HCT116 (cell line): ENCODE measurements at regions of chr12 and their contacts with region 1.

Region 1: GRCh38 chr12:8078398-8078797 is 3.7 kb upstream of the NECAP1 start:
- DNase-seq: peak; percentile 50
- ATAC-seq: peak; percentile 34; the same call in 1 of the 2 replicates
- H3K4me3 ChIP-seq: no peak overlapping the region
- H3K27ac ChIP-seq: no peak overlapping the region
- H3K4me1 ChIP-seq: peaks cover 7 to 22% of the 10 kb centered on the region in 2 experiments
- H3K27me3 ChIP-seq: no peaks in the 10 kb centered on the region
- CTCF ChIP-seq: peak; percentile 47 to 71 (median 48); a peak in 5 of 6 replicates
- POLR2A ChIP-seq: no peak
- RAD21 ChIP-seq: peak; percentile 75

Region 2: DNA sequence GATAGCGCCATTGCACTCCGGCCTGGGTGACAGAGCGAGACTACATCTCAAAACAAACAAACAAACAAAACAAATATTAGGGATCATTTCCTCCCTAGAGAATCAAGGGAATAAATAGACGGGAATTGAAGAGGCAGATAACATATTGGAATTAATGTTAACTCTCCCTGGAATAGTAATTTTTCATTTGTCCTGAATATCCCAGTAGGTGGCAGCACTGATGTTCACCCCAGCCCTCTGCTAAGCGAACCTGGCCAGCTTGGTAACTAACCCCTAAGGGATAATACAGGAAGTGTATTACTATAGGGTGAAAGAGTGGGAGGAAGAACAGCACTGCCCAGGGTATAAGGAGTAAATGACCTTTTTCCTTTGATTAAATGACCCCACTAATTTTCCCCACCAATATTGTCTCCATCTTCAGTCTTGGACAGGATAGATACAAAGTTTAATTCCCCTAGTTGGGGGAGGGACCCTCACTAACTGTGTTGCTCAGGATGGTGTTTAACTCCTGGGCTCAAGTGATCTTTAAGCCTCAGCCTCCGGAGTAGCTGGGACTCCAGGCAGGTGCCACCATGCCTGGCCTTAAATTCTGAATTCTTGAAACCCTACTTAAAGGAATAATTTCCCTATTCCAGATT is 246.2 kb before region 1 on chr12:
- CTCF ChIA-PET with region 1: interaction called, 8 read pairs
- POLR2A ChIA-PET with region 1: no interaction called
- RAD21 ChIA-PET with region 1: no interaction called
- intact Hi-C with region 1: loop called (anchors 2 kb)
- DNase-seq: peak; percentile 32
- ATAC-seq: peak; percentile 99
- H3K4me3 ChIP-seq: no peak overlapping the region
- H3K27ac ChIP-seq: no peak overlapping the region
- H3K4me1 ChIP-seq: no peaks in the 10 kb centered on the region
- H3K27me3 ChIP-seq: no peaks in the 10 kb centered on the region
- CTCF ChIP-seq: peak; percentile 59 to 73 (median 60); a peak in 5 of 6 replicates
- POLR2A ChIP-seq: no peak
- RAD21 ChIP-seq: peak; percentile 57

Region 3: GRCh38 chr12:7859552-7859951 is 218.8 kb before region 1 on chr12:
- CTCF ChIA-PET with region 1: interaction called, 10 read pairs
- POLR2A ChIA-PET with region 1: no interaction called
- RAD21 ChIA-PET with region 1: no interaction called
- intact Hi-C with region 1: loop called (anchors 10 kb)
- DNase-seq: no peak
- ATAC-seq: no peak
- H3K4me3 ChIP-seq: no peak overlapping the region
- H3K27ac ChIP-seq: no peak overlapping the region
- H3K4me1 ChIP-seq: peaks cover 0 to 16% of the 10 kb centered on the region in 2 experiments; a peak in 2 of 4 replicates
- H3K27me3 ChIP-seq: no peaks in the 10 kb centered on the region
- CTCF ChIP-seq: no peak
- POLR2A ChIP-seq: no peak
- RAD21 ChIP-seq: no peak

Region 4: GRCh38 chr12:7869127-7869526 is 209.3 kb before region 1 on chr12:
- CTCF ChIA-PET with region 1: no interaction called
- POLR2A ChIA-PET with region 1: no interaction called
- RAD21 ChIA-PET with region 1: no interaction called
- intact Hi-C with region 1: loop called (anchors 10 kb)
- DNase-seq: no peak
- ATAC-seq: no peak
- H3K4me3 ChIP-seq: no peak overlapping the region
- H3K27ac ChIP-seq: no peak overlapping the region
- H3K4me1 ChIP-seq: no peaks in the 10 kb centered on the region
- H3K27me3 ChIP-seq: no peaks in the 10 kb centered on the region
- CTCF ChIP-seq: no peak
- POLR2A ChIP-seq: no peak
- RAD21 ChIP-seq: no peak

Region 5: GRCh38 chr12:7981446-7981845 is 97.0 kb before region 1 on chr12:
- CTCF ChIA-PET with region 1: no interaction called
- POLR2A ChIA-PET with region 1: no interaction called
- RAD21 ChIA-PET with region 1: no interaction called
- intact Hi-C with region 1: no loop called
- DNase-seq: no peak
- ATAC-seq: no peak
- H3K4me3 ChIP-seq: no peak overlapping the region
- H3K27ac ChIP-seq: no peak overlapping the region
- H3K4me1 ChIP-seq: peaks cover 10 to 42% of the 10 kb centered on the region in 2 experiments
- H3K27me3 ChIP-seq: no peaks in the 10 kb centered on the region
- CTCF ChIP-seq: no peak
- POLR2A ChIP-seq: no peak
- RAD21 ChIP-seq: no peak

Region 6: GRCh38 chr12:8026291-8026900 is 52.0 kb before region 1 on chr12:
- CTCF ChIA-PET with region 1: interaction called, 5 read pairs
- POLR2A ChIA-PET with region 1: no interaction called
- RAD21 ChIA-PET with region 1: no interaction called
- intact Hi-C with region 1: loop called (anchors 5 kb)
- DNase-seq: peak; percentile 97
- ATAC-seq: peak; percentile 93
- H3K4me3 ChIP-seq: peak overlapping the region; percentile 61 to 62
- H3K27ac ChIP-seq: peak overlapping the region; percentile 97
- H3K4me1 ChIP-seq: peaks cover 5 to 23% of the 10 kb centered on the region in 2 experiments; a peak in 3 of 4 replicates
- H3K27me3 ChIP-seq: no peaks in the 10 kb centered on the region
- CTCF ChIP-seq: no peak
- POLR2A ChIP-seq: no peak
- RAD21 ChIP-seq: no peak

Region 7: GRCh38 chr12:8045952-8046944 is 32.1 kb before region 1 on chr12:
- CTCF ChIA-PET with region 1: interaction called, 35 read pairs
- POLR2A ChIA-PET with region 1: no interaction called
- RAD21 ChIA-PET with region 1: no interaction called
- intact Hi-C with region 1: loop called (anchors 2 kb)
- DNase-seq: no peak
- ATAC-seq: peak; percentile 92
- H3K4me3 ChIP-seq: no peak overlapping the region
- H3K27ac ChIP-seq: no peak overlapping the region
- H3K4me1 ChIP-seq: no peaks in the 10 kb centered on the region
- H3K27me3 ChIP-seq: no peaks in the 10 kb centered on the region
- CTCF ChIP-seq: peak; percentile 55 to 86 (median 85); a peak in 5 of 6 replicates
- POLR2A ChIP-seq: no peak
- RAD21 ChIP-seq: peak; percentile 53

Region 8: DNA sequence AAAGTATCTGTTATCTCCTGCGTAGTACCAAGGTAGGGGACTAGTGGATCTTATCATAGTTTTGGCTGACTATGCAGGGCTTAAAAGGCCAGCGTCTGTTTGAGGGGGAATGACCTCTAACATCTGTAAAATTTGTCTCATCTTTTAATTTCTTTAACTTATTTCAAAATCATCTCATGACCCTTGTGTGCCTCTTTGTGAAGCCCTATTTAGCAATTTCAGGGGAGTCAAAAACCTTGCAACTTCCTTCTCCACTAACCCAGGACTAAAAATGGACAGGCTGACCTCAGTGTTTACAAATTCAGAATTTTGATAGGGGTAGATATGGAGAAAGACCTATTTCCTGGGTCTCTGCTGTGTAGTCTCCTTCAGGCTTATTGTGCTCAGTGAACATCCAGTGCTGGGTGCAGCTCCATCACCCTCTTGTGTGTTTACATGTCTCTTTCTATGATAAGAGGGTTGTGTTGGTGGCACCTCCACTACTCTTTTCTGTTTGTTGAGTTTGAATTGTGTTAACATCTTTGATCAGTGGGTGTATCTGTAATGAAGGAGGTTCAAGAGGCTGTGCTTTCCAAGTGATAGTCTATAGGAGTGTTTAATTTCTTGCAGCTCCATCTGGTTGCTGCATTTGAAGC is 18.0 kb after region 1 on chr12:
- CTCF ChIA-PET with region 1: no interaction called
- POLR2A ChIA-PET with region 1: no interaction called
- RAD21 ChIA-PET with region 1: no interaction called
- intact Hi-C with region 1: no loop called
- DNase-seq: no peak
- ATAC-seq: no peak
- H3K4me3 ChIP-seq: no peak overlapping the region
- H3K27ac ChIP-seq: no peak overlapping the region
- H3K4me1 ChIP-seq: no peaks in the 10 kb centered on the region
- H3K27me3 ChIP-seq: no peaks in the 10 kb centered on the region
- CTCF ChIP-seq: no peak
- POLR2A ChIP-seq: no peak
- RAD21 ChIP-seq: no peak